ENCODE measurements at regions of chr1 and their contacts with region 1.

Region 1: GRCh38 chr1:45011837-45012638 is at the start of gene UROD:
- DNase-seq: peak; percentile 82 to 96
- ATAC-seq: peak; percentile 85 to 93 (median 88)
- H3K4me3 ChIP-seq: peak within 1 kb of the TSS; percentile 63
- H3K4me3 Mint-ChIP-seq: peak within 1 kb of the TSS; percentile 89
- H3K27ac ChIP-seq: peak within 1 kb of the TSS; percentile 76
- H3K27ac Mint-ChIP-seq: peak within 1 kb of the TSS; percentile 94 to 97
- H3K4me1 ChIP-seq: peaks cover 39% of the 10 kb centered on the region
- H3K4me1 Mint-ChIP-seq: peaks cover 43 to 62% of the 10 kb centered on the region in 2 donors
- H3K27me3 ChIP-seq: no peaks in the 10 kb centered on the region
- H3K27me3 Mint-ChIP-seq: no peaks in the 10 kb centered on the region
- CTCF ChIP-seq: no peak
- total RNA-seq, gene UROD: 54.5 to 65.4 (median 56.6) TPM

Region 2: DNA sequence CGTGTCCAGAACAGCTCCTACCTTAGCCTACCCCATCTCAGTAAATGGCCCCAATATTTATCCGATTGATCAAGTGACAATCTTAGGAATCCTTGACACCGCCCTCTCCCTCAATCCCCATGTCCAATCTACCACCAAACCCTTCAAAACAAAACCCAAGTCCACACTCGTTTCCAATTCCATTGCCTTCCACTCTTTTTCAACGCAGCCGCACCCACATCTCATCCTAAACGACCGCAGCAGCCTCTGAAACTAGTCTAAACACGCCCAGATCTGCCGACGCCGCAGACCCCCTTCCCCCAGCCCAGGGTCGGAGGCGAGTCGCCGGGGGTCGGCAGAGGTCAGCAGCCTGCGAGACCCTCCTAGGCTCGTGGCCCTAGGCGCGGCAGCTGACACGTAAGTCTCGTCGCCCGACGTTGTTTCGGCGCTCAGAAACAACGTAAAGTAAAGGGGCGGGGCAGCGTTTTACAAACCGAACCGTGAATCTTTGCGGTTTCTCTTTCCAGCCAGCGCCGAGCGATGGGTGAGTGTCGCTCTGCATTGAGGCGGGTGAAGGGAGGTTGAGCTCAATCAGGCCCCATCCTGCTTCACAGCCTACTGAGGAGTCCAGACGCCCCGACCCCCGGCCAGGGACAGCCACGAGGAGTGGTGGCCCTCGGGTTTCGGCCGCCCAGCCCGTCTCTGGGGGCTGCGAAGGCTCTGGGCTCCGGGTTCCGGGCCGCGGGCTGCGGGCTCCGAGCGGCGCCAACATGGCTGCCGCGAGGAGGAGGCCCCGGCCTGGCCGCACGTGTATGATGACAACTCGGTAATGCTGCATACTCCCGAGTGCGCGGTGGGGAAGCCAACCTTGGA is 236.7 kb before region 1 on chr1 and contains the start of gene RPS8:
- intact Hi-C with region 1: loop called (anchors 5 kb)
- DNase-seq: peak; percentile 84 to 96
- ATAC-seq: peak; percentile 83 to 89 (median 86)
- H3K4me3 ChIP-seq: peak within 1 kb of the TSS; percentile 65
- H3K4me3 Mint-ChIP-seq: peak within 1 kb of the TSS; percentile 99
- H3K27ac ChIP-seq: peak within 1 kb of the TSS; percentile 85
- H3K27ac Mint-ChIP-seq: peak within 1 kb of the TSS; percentile 92 to 97
- H3K4me1 ChIP-seq: peaks cover 26% of the 10 kb centered on the region
- H3K4me1 Mint-ChIP-seq: peaks cover 30 to 36% of the 10 kb centered on the region in 2 donors
- H3K27me3 ChIP-seq: no peaks in the 10 kb centered on the region
- H3K27me3 Mint-ChIP-seq: no peaks in the 10 kb centered on the region
- CTCF ChIP-seq: no peak
- total RNA-seq, gene RPS8: 848 to 1,092 (median 1,009) TPM

Region 3: GRCh38 chr1:44985747-44986359 is 26.2 kb before region 1 on chr1:
- intact Hi-C with region 1: loop called (anchors 1 kb)
- DNase-seq: no peak
- ATAC-seq: no peak
- H3K4me3 ChIP-seq: peak overlapping the region; percentile 66
- H3K4me3 Mint-ChIP-seq: peak overlapping the region; percentile 99
- H3K27ac ChIP-seq: peak overlapping the region; percentile 5
- H3K27ac Mint-ChIP-seq: peak overlapping the region; percentile 89 to 94
- H3K4me1 ChIP-seq: peaks cover 19% of the 10 kb centered on the region
- H3K4me1 Mint-ChIP-seq: peaks cover 17 to 18% of the 10 kb centered on the region in 2 donors
- H3K27me3 ChIP-seq: no peaks in the 10 kb centered on the region
- H3K27me3 Mint-ChIP-seq: no peaks in the 10 kb centered on the region
- CTCF ChIP-seq: no peak

Region 4: DNA sequence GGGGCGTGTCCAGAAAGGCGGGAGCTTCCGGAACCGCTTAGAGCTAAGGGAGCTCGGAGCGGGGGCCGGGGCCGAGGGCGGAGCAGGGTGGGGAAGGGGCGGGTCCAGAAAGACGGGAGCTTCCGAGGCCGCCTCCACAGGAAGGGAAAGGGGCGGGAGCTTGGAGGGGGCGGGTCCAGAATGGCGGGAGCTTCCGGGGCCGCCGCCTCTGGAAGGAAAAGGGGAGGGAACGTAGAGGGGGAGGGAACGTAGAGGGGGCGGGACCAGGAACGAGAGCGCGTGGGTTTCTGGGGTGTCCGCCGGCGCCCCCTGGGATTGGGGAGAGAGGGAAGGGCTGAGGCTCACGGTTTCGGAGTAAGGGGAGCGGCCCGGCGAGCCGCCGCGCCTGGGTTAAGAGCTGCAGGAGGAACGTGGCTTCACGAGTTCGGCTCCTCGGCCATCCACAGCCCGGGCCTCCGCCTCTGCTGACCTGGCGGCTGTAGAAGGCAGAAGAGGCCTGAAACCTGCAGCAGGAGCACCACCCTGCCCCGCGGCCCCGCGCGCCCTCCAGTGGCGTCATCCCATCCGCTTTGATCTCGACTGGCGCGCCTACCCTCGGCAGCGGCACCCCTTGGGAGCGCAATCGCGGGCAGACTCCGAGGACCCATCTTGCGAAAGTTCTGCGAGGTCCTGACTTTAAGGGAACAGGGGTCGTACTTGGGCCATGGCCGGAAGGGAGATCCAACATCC is 291.7 kb after region 1 on chr1:
- intact Hi-C with region 1: loop called (anchors 1 kb)
- DNase-seq: peak; percentile 79 to 98
- ATAC-seq: peak; percentile 84 to 95 (median 87)
- H3K4me3 ChIP-seq: peak overlapping the region; percentile 84
- H3K4me3 Mint-ChIP-seq: peak overlapping the region; percentile 91
- H3K27ac ChIP-seq: peak overlapping the region; percentile 93
- H3K27ac Mint-ChIP-seq: peak overlapping the region; percentile 91 to 93
- H3K4me1 ChIP-seq: peaks cover 17% of the 10 kb centered on the region
- H3K4me1 Mint-ChIP-seq: peaks cover 9 to 12% of the 10 kb centered on the region in 2 donors
- H3K27me3 ChIP-seq: no peaks in the 10 kb centered on the region
- H3K27me3 Mint-ChIP-seq: no peaks in the 10 kb centered on the region
- CTCF ChIP-seq: peak; percentile 70

Region 5: GRCh38 chr1:45490626-45491486 is 478.8 kb after region 1 on chr1 and contains the start of gene TESK2:
- intact Hi-C with region 1: loop called (anchors 1 kb)
- DNase-seq: peak; percentile 97 to 99
- ATAC-seq: peak; percentile 91 to 99 (median 92)
- H3K4me3 ChIP-seq: peak within 1 kb of the TSS; percentile 73
- H3K4me3 Mint-ChIP-seq: no peak within 1 kb of the TSS
- H3K27ac ChIP-seq: peak within 1 kb of the TSS; percentile 65
- H3K27ac Mint-ChIP-seq: no peak within 1 kb of the TSS
- H3K4me1 ChIP-seq: peaks cover 18% of the 10 kb centered on the region
- H3K4me1 Mint-ChIP-seq: peaks cover 5 to 6% of the 10 kb centered on the region in 2 donors
- H3K27me3 ChIP-seq: no peaks in the 10 kb centered on the region
- H3K27me3 Mint-ChIP-seq: no peaks in the 10 kb centered on the region
- CTCF ChIP-seq: no peak
- total RNA-seq, gene TESK2: 5.1 to 7.4 (median 6.0) TPM

Region 6: DNA sequence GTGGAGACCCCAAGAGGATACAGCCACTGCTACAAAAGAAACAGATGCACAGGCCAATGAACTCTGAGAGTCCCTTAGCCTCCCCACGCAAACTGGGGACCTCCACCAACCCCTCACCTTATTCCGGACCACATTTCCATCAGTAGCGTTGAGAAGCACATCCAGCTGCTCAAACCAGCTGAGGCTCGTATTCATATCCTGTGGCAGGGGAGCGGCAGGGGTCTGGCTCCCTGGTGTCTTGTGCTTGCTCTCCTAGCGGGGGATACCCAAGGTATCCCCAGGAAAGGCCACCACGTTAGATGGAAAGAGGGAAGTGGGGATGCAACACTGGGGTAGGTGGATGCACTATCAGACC is 487.4 kb after region 1 on chr1:
- intact Hi-C with region 1: loop called (anchors 1 kb)
- DNase-seq: no peak
- ATAC-seq: no peak
- H3K4me3 ChIP-seq: peak overlapping the region; percentile 58
- H3K4me3 Mint-ChIP-seq: peak overlapping the region; percentile 94
- H3K27ac ChIP-seq: peak overlapping the region; percentile 46
- H3K27ac Mint-ChIP-seq: peak overlapping the region; percentile 83 to 90
- H3K4me1 ChIP-seq: peaks cover 17% of the 10 kb centered on the region
- H3K4me1 Mint-ChIP-seq: peaks cover 26 to 28% of the 10 kb centered on the region in 2 donors
- H3K27me3 ChIP-seq: no peaks in the 10 kb centered on the region
- H3K27me3 Mint-ChIP-seq: no peaks in the 10 kb centered on the region
- CTCF ChIP-seq: no peak

Region 7: DNA sequence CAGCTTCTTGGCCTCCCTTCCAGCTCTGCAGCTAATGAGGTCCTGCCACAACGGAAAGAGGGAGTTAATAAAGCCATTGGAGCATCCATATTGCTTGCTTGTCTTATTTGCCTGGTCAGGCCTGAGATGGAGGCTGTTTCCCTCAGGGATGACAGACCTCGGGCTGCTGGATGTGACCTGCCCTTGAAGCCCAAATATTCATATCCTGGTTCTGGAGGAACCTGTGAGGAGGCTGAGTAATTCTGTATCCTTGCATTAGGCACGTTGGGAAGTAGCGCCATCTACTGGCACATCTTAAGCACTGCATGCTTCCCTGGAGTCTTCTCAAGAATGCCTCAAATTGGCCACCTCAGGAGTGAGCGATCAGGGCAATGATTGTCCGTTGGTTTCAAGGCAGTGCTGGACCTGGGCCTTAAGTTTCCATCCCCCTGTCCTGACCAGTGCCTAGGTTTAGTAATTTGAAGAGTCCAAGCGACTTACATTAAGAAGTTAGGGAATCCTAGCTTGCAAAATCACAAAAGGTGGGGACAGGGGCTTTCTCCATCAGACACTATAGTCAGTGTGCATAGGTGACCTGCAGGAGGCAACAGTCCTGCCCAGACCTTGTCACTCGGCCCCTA is 558.0 kb after region 1 on chr1:
- intact Hi-C with region 1: loop called (anchors 1 kb)
- DNase-seq: peak; percentile 59 to 87
- ATAC-seq: peak; percentile 93 to 100 (median 97)
- H3K4me3 ChIP-seq: no peak overlapping the region
- H3K4me3 Mint-ChIP-seq: no peak overlapping the region
- H3K27ac ChIP-seq: no peak overlapping the region
- H3K27ac Mint-ChIP-seq: peak overlapping the region in 1 of 2 donors; percentile 11
- H3K4me1 ChIP-seq: no peaks in the 10 kb centered on the region
- H3K4me1 Mint-ChIP-seq: no peaks in the 10 kb centered on the region
- H3K27me3 ChIP-seq: no peaks in the 10 kb centered on the region
- H3K27me3 Mint-ChIP-seq: no peaks in the 10 kb centered on the region
- CTCF ChIP-seq: peak; percentile 94